Gastrocnemius medialis (tissue), 4 donors: ENCODE measurements at regions of chr2 and their contacts with region 1.

Region 1: GRCh38 chr2:178914259-178914849 is 107.1 kb upstream of the TTN start:
- DNase-seq: peak; percentile 76 to 85
- ATAC-seq: peak; percentile 84 to 89
- H3K4me3 ChIP-seq: no peak overlapping the region
- H3K27ac ChIP-seq: peak overlapping the region; percentile 48 to 83 (median 78)
- H3K4me1 ChIP-seq: peaks cover 44 to 50% of the 10 kb centered on the region in 2 donors
- H3K27me3 ChIP-seq: no peaks in the 10 kb centered on the region
- CTCF ChIP-seq: peak; percentile 82 to 86 (median 85)
- POLR2A ChIP-seq: no peak

Region 2: DNA sequence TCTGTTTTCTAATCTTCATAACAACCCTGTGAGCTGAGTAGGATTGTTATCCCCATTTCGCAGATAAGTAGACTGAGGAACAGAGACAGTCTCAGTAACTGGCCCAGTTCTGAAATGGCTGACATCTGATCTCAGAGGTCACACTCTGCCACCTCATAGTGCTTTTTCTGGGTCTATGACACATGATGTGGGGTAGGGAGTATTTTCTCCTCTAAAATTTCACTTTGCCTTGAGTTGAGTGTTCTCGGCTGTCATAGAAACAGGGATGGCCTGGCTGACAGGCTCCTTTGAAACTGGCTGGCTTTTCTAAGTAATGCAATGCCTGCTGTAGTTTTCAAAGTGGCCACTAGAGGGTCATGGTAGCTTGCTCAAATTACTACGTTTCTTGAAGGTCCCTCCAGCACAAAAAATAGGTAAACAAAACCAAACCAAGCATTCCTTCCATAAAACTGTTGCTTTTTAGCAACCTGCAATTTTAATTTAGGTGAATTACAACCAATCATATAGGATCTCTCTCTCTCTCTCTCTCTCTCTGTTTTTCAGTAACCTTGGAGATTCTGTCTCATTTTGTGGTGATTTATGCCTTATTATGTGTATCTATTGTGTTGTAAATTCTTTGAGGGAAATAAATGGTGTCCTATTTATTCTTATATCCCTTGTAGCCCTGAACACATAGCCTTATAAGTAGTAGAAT is 22.9 kb before region 1 on chr2:
- in situ Hi-C with region 1: no loop called
- intact Hi-C with region 1: loop called (anchors 1 kb)
- DNase-seq: peak; percentile 74 to 89
- ATAC-seq: peak; percentile 95 to 96
- H3K4me3 ChIP-seq: peak overlapping the region in 1 of 4 donors; percentile 1
- H3K27ac ChIP-seq: peak overlapping the region; percentile 55 to 84 (median 80)
- H3K4me1 ChIP-seq: peaks cover 65 to 75% of the 10 kb centered on the region in 2 donors
- H3K27me3 ChIP-seq: no peaks in the 10 kb centered on the region
- CTCF ChIP-seq: peak; percentile 89 to 99 (median 96)
- POLR2A ChIP-seq: no peak

Region 3: GRCh38 chr2:179020156-179020750 is 105.9 kb after region 1 on chr2:
- in situ Hi-C with region 1: no loop called
- intact Hi-C with region 1: loop called (anchors 10 kb)
- DNase-seq: peak; percentile 27 to 51
- ATAC-seq: peak; percentile 90 to 94
- H3K4me3 ChIP-seq: no peak overlapping the region
- H3K27ac ChIP-seq: no peak overlapping the region
- H3K4me1 ChIP-seq: no peaks in the 10 kb centered on the region
- H3K27me3 ChIP-seq: no peaks in the 10 kb centered on the region
- CTCF ChIP-seq: peak; percentile 46 to 76 (median 50)
- POLR2A ChIP-seq: no peak

Region 4: GRCh38 chr2:179129574-179130238 is 215.4 kb after region 1 on chr2:
- in situ Hi-C with region 1: no loop called
- intact Hi-C with region 1: loop called (anchors 10 kb)
- DNase-seq: no peak
- ATAC-seq: no peak
- H3K4me3 ChIP-seq: no peak overlapping the region
- H3K27ac ChIP-seq: no peak overlapping the region
- H3K4me1 ChIP-seq: no peaks in the 10 kb centered on the region
- H3K27me3 ChIP-seq: no peaks in the 10 kb centered on the region
- CTCF ChIP-seq: peak in 3 of 5 experiments; percentile 15 to 60 (median 47)
- POLR2A ChIP-seq: no peak